ENCODE measurements at regions of chr6 and their contacts with region 1.

Region 1: GRCh38 chr6:56955171-56956045 is 501 bp downstream of the BEND6 start:
- DNase-seq: peak; percentile 69
- H3K4me3 ChIP-seq: peak overlapping the region; percentile 50 to 57
- H3K27ac ChIP-seq: peak overlapping the region in 1 of 2 donors; percentile 50
- H3K4me1 ChIP-seq: no peaks in the 10 kb centered on the region
- H3K27me3 ChIP-seq: no peaks in the 10 kb centered on the region
- CTCF ChIP-seq: peak; percentile 26 to 67 (median 64)
- POLR2A ChIP-seq: no peak

Region 2: DNA sequence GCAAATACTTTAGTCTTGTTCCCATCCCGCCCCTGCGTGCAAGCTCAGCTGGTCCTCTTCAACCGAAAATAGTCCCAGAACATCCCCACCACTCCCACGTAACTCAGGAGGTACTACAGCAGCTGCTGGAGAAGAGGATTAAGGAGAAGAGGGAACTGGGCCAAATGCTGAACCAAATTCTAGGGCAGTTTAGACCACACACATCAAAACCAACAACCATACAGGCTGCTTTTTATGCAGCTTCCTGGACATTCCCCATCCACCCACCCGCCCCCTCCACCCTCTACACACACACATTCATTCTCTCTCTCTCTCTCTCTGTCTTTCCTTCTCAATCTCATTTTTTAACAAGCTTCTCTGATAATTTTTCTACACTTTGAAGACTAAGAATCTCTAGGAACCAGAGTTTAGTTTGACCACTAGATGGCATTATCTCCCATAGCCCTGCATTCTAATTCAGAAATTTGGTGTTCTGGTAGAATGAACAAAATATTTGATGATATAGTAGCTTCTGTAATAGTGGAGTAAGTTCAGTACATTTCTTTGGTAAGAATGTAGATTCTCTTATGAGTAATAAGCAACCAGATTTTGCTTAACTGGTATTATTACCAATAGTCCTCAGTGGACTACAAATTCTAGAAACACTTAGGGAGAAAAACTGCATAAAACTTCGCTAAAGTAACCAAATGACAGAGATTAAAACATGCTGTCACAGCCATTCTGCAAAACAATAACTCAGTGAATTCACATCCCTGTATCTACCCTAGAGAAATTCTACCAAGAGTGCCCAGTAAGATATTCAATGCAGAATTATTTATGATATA is 52.6 kb before region 1 on chr6:
- intact Hi-C with region 1: loop called (anchors 5 kb)
- DNase-seq: no peak
- H3K4me3 ChIP-seq: no peak overlapping the region
- H3K27ac ChIP-seq: no peak overlapping the region
- H3K4me1 ChIP-seq: no peaks in the 10 kb centered on the region
- H3K27me3 ChIP-seq: no peaks in the 10 kb centered on the region
- CTCF ChIP-seq: peak; percentile 37 to 60 (median 52)
- POLR2A ChIP-seq: no peak

Region 3: GRCh38 chr6:57172136-57173055 is 217.0 kb after region 1 on chr6 and contains the start of gene BAG2:
- intact Hi-C with region 1: loop called (anchors 10 kb)
- DNase-seq: peak; percentile 68
- H3K4me3 ChIP-seq: peak within 1 kb of the TSS; percentile 66 to 80
- H3K27ac ChIP-seq: peak within 1 kb of the TSS; percentile 88 to 89
- H3K4me1 ChIP-seq: no peaks in the 10 kb centered on the region
- H3K27me3 ChIP-seq: no peaks in the 10 kb centered on the region
- CTCF ChIP-seq: peak in 2 of 4 experiments; percentile 13 to 47
- POLR2A ChIP-seq: peak; percentile 48
- total RNA-seq, gene BAG2: 5.4 to 6.8 TPM